Activated B cell treated with CpG ODN at 0.5 μM for 24 hours (primary cell): ENCODE measurements at regions of chr6 and their contacts with region 1.

Region 1: DNA sequence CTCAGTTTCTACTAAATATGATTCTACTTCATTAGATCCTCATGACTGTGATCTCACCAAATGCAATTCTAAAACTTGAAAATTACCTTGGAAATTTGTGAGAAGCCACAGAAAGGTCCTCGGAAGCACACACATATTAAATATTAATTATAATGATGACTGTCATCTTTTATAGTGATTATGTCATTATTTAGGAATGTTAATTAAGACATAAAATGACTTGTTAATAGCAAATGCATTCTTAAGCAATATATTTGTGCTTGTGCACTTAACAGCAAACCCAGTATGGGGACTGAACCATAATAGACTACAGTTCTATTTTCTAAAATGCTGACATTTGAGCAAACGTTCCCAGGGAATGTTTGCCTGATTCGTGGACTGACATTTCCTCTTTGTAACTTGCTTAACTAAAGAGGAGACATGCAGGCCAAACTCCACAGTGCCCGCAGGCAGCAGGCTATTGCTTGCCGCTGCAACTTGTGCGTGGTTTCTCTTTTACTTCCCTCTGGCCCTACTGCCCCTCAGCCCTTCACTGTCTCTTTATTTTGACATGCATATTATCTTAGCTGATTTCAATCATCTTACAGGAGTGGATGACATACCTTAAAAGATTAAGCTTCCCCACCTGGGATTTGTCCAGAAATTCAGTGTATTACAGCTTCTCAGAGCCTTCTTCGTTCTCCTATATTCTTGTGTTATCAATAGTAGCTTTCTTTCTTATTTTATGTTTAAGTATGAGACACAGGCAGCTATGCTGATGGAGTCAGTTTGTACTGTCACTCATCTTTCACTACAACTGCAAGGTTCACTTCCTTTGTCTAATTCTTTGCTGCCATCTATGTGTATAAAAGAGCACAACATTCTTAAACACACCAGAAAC is 141.5 kb downstream of the GMDS start:
- DNase-seq: no peak
- ATAC-seq: peak; percentile 49
- H3K4me3 Mint-ChIP-seq: no peak overlapping the region
- H3K27ac Mint-ChIP-seq: no peak overlapping the region
- H3K4me1 Mint-ChIP-seq: no peaks in the 10 kb centered on the region
- H3K27me3 Mint-ChIP-seq: no peaks in the 10 kb centered on the region
- CTCF ChIP-seq: no peak

Region 2: GRCh38 chr6:1596088-1596852 is 507.6 kb before region 1 on chr6:
- CTCF ChIA-PET with region 1: interaction called, 15 read pairs
- POLR2A ChIA-PET with region 1: no interaction called
- intact Hi-C with region 1: no loop called
- DNase-seq: peak; percentile 50
- ATAC-seq: peak; percentile 87
- H3K4me3 Mint-ChIP-seq: no peak overlapping the region
- H3K27ac Mint-ChIP-seq: no peak overlapping the region
- H3K4me1 Mint-ChIP-seq: peaks cover 4% of the 10 kb centered on the region
- H3K27me3 Mint-ChIP-seq: peaks cover 49% of the 10 kb centered on the region
- CTCF ChIP-seq: no peak

Region 3: GRCh38 chr6:1624851-1625781 is 478.8 kb before region 1 on chr6:
- CTCF ChIA-PET with region 1: interaction called, 12 read pairs
- POLR2A ChIA-PET with region 1: no interaction called
- intact Hi-C with region 1: no loop called
- DNase-seq: no peak
- ATAC-seq: peak; percentile 53
- H3K4me3 Mint-ChIP-seq: peak overlapping the region; percentile 78
- H3K27ac Mint-ChIP-seq: no peak overlapping the region
- H3K4me1 Mint-ChIP-seq: peaks cover 17% of the 10 kb centered on the region
- H3K27me3 Mint-ChIP-seq: peaks cover 67% of the 10 kb centered on the region
- CTCF ChIP-seq: no peak

Region 4: GRCh38 chr6:1792989-1793388 is 310.9 kb before region 1 on chr6:
- CTCF ChIA-PET with region 1: no interaction called
- POLR2A ChIA-PET with region 1: no interaction called
- intact Hi-C with region 1: loop called (anchors 1 kb)
- DNase-seq: no peak
- ATAC-seq: peak; percentile 60
- H3K4me3 Mint-ChIP-seq: no peak overlapping the region
- H3K27ac Mint-ChIP-seq: no peak overlapping the region
- H3K4me1 Mint-ChIP-seq: peaks cover 14% of the 10 kb centered on the region
- H3K27me3 Mint-ChIP-seq: no peaks in the 10 kb centered on the region
- CTCF ChIP-seq: no peak

Region 5: DNA sequence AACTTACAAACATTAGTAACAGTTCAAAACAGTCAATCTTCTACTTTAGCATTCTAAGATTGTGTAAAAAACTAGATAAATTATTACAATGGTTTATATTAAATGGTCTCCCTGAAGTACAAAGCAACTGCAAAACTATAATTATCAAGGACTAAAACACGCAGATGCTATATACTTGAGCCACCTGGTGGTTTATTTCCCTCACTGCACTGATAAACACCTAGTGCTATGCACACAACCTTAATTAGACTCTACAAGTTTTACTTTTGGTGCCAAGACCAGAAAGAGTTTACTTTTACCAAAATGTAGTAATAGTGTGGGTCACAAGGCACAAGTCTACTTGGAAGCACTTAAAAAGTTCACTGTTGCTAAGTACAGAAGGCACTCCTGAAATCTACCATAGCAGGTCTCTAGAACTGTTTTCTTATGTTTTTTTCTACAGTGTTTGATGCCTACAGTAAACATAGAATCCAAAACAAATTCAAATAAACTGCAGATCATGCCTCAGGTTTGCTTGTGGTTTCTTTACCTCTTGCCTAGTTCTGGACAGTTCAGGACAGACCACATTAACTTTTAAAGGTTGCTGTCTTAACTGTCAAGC is 92.3 kb after region 1 on chr6:
- CTCF ChIA-PET with region 1: interaction called, 4 read pairs
- POLR2A ChIA-PET with region 1: no interaction called
- intact Hi-C with region 1: loop called (anchors 1 kb)
- DNase-seq: no peak
- ATAC-seq: peak; percentile 65
- H3K4me3 Mint-ChIP-seq: no peak overlapping the region
- H3K27ac Mint-ChIP-seq: no peak overlapping the region
- H3K4me1 Mint-ChIP-seq: no peaks in the 10 kb centered on the region
- H3K27me3 Mint-ChIP-seq: no peaks in the 10 kb centered on the region
- CTCF ChIP-seq: peak; percentile 33

Region 6: GRCh38 chr6:2448820-2449571 is 345.1 kb after region 1 on chr6:
- CTCF ChIA-PET with region 1: no interaction called
- POLR2A ChIA-PET with region 1: no interaction called
- intact Hi-C with region 1: loop called (anchors 10 kb)
- DNase-seq: no peak
- ATAC-seq: no peak
- H3K4me3 Mint-ChIP-seq: peak overlapping the region; percentile 67
- H3K27ac Mint-ChIP-seq: no peak overlapping the region
- H3K4me1 Mint-ChIP-seq: peaks cover 8% of the 10 kb centered on the region
- H3K27me3 Mint-ChIP-seq: no peaks in the 10 kb centered on the region
- CTCF ChIP-seq: no peak

Region 7: DNA sequence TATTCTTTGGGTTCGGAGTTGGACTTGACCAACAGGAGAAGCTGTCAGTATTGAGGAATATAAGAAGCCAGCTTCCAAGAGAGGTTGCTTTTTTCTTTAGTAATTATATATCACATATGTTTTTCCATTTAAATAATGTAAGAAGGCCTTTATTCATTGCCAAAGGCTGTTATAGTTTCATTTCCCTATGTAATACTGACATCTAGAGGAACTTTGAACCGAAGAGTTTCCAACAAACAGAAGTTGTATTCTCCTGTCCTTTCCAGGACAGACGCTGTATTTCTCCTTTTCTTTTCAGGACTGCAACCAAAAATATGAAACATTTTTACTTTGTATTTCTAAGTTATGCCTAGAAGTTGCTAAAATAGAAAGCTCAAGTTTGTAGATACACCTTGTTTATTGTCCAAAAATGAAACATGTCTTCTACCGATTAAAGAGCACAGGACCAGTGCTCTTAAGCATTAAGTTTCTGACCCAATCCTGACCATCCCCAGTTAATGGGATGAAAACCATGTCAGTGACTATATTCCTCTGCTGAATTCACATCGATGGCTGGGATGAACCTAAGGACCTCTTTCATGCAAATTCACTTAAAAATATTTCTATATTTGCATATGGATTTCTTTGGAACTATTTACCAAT is 591.7 kb after region 1 on chr6:
- CTCF ChIA-PET with region 1: no interaction called
- POLR2A ChIA-PET with region 1: no interaction called
- intact Hi-C with region 1: loop called (anchors 1 kb)
- DNase-seq: no peak
- ATAC-seq: no peak
- H3K4me3 Mint-ChIP-seq: no peak overlapping the region
- H3K27ac Mint-ChIP-seq: no peak overlapping the region
- H3K4me1 Mint-ChIP-seq: no peaks in the 10 kb centered on the region
- H3K27me3 Mint-ChIP-seq: peaks cover 6% of the 10 kb centered on the region
- CTCF ChIP-seq: peak; percentile 28